Activated CD4-positive, alpha-beta T cell treated with anti-CD3 and anti-CD28 coated beads for 36 hours (primary cell): ENCODE measurements at regions of chr1 and their contacts with region 1.

Region 1: DNA sequence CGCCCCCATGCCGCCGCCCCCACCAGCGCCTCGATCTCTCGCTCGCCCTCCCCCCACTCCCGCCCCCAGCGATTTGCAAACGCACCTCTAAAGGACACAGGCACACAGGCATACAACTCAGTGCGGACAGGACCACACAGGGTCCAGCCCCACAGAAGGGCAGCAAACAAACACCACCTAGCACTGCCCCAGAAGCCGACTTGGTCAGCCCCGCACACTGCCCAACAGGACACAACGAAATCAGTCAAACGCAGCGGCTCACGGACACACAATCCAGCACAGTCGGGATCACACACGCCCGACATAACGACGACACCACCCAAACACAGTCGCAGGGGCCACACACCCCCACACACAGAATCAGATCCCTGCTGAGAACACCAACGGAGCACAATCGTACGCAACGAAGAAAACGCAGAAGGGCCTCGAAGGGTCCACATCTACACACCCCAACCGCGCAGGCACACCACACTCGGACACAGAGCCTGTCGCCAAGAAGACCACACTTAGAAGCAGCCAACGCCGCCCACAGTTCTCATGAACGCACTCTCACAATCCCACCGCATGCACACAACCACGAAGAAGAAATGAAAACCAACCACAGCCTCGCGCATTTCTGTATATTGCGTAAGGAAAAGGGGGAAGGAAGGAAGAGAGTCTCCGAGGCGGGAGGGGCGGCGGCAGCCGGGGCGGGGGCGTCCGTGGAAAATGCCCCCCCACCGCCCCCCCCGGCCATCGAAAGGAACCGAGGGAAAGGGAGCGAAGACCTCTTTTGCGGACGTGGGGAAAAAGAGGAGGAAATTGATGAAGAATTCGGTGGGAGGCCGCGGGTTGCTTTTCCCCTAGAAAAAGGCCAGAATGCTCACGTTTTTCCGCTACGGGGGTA is 481 bp downstream of the TAL1 start:
- DNase-seq: peak; percentile 43
- ATAC-seq: peak; percentile 28
- H3K4me3 Mint-ChIP-seq: peak overlapping the region; percentile 73
- H3K27ac Mint-ChIP-seq: peak overlapping the region; percentile 48
- H3K4me1 Mint-ChIP-seq: peaks cover 24% of the 10 kb centered on the region
- H3K27me3 Mint-ChIP-seq: peaks cover 73% of the 10 kb centered on the region

Region 2: GRCh38 chr1:46489638-46490405 is 741.7 kb before region 1 on chr1 and contains the start of gene DMBX1:
- CTCF ChIA-PET with region 1: no interaction called
- POLR2A ChIA-PET with region 1: no interaction called
- intact Hi-C with region 1: loop called in 1 of 2 experiments (anchors 5 kb)
- DNase-seq: peak; percentile 74
- ATAC-seq: peak; percentile 79
- H3K4me3 Mint-ChIP-seq: peak within 1 kb of the TSS; percentile 66
- H3K27ac Mint-ChIP-seq: no peak within 1 kb of the TSS
- H3K4me1 Mint-ChIP-seq: peaks cover 22% of the 10 kb centered on the region
- H3K27me3 Mint-ChIP-seq: peaks cover 76% of the 10 kb centered on the region
- total RNA-seq, gene DMBX1: 0.05 TPM in 1 of 2 experiments, not detected in the other

Region 3: DNA sequence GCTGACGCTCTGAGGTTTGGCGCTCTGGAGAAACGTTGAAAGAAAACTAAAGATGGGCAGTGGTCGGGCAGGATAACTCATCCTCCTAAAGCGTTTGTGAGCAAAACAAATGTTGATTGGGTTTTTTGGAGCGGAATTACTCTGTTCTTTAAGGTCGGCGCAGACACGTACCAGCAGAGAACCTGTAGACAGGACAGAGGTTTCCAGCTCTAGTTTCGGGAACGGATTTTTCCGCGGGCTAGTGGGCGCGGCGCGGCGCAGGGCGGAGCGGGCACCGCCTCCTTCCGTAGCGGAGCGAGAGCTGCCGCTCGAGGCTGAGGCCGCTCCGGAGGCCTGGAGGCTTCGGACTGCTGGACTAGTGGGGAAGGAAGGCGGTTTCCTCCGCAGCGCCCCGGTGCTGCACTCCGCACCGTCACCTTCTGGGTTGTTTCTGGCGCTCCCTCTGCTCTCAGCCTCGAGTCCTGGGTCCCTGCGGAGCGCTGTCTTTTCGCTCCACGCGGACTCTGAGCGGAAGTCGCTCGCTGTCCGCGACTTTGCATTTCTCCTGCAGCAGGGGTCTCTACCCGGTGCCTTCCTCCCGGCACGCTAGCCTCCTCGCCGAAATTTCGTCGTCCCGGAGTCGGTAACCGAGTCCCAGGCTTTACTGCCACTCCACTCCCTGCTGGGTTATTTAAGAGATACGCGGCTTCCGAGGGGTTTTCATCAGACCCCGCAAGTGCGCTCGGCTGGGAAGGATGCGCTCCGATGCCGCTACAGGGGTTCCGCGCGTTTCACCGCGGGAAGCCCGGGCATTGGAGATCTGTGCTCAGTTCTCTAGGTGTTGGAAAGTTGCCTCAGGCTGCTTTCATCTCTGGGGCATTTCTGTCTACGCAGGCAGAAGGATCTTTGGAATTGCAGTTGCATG is 213.3 kb after region 1 on chr1:
- CTCF ChIA-PET with region 1: no interaction called
- POLR2A ChIA-PET with region 1: no interaction called
- intact Hi-C with region 1: loop called (anchors 2 to 10 kb)
- DNase-seq: peak; percentile 57
- ATAC-seq: peak; percentile 67
- H3K4me3 Mint-ChIP-seq: peak overlapping the region; percentile 36
- H3K27ac Mint-ChIP-seq: no peak overlapping the region
- H3K4me1 Mint-ChIP-seq: peaks cover 18% of the 10 kb centered on the region
- H3K27me3 Mint-ChIP-seq: peaks cover 46% of the 10 kb centered on the region